Activated CD8-positive, alpha-beta T cell treated with anti-CD3 and anti-CD28 coated beads, Interleukin-2, amount 10 ng/mL, durations not matched to agents 7 days and 5 days (primary cell): ENCODE measurements at regions of chr1 and their contacts with region 1.

Region 1: DNA sequence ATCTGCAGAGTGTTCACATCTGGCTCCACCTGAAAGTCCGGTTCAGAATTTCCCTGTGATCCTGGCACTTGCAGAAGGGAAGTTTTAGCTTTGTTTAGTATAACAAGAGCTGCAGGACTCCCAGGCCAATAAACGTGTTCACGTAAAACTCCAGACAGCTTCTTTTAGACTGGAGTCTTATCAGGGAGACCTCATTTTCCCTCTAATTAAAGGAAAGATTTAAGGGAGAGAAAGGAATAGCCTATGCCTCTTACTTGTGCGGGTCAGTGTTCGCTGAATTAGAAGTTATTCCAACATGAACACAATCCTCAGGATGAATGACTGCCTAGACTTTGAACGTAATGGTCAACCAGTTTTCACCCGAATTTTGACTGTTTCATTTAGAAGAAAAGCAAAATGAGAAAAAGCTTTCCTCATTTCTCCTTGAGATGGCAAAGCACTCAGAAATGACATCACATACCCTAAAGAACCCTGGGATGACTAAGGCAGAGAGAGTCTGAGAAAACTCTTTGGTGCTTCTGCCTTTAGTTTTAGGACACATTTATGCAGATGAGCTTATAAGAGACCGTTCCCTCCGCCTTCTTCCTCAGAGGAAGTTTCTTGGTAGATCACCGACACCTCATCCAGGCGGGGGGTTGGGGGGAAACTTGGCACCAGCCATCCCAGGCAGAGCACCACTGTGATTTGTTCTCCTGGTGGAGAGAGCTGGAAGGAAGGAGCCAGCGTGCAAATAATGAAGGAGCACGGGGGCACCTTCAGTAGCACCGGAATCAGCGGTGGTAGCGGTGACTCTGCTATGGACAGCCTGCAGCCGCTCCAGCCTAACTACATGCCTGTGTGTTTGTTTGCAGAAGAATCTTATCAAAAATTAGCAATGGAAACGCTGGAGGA is 202.1 kb upstream of the SGIP1 start:
- DNase-seq: peak; percentile 60
- ATAC-seq: peak; percentile 40
- H3K4me3 Mint-ChIP-seq: peak overlapping the region; percentile 97
- H3K27ac Mint-ChIP-seq: peak overlapping the region; percentile 91
- H3K4me1 Mint-ChIP-seq: peaks cover 57% of the 10 kb centered on the region
- H3K27me3 Mint-ChIP-seq: no peaks in the 10 kb centered on the region

Region 2: DNA sequence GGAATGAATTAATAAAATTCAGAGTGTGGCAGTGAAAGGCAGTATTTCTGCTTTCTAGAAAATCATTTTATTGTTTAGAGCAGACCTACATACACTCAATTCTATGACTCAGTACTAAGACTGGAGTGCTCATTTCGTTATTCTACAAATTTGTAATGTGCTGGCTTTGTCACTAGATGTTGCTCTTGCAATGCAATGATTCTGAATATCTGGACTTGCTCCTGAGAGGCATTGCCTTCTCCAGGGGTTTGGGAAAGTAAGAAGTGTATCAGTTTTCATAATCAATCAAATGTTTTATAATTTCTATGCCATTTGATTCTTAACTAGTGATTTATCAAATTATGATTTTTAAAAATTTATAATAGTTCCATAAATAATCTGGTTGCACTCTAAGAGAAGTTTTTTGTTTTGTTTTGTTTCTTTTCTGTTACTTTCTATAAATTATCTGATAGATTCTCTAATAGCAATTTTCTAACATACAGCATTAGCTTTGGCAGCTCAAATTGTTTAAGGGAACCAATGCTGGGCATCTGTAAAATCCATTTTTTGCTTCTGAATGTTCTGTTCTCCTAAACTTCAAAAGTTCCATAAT is 78.5 kb before region 1 on chr1:
- CTCF ChIA-PET with region 1: interaction called, 16 read pairs
- POLR2A ChIA-PET with region 1: interaction called, 6 read pairs
- DNase-seq: peak; percentile 46
- ATAC-seq: peak; percentile 83
- H3K4me3 Mint-ChIP-seq: no peak overlapping the region
- H3K27ac Mint-ChIP-seq: no peak overlapping the region
- H3K4me1 Mint-ChIP-seq: peaks cover 37% of the 10 kb centered on the region
- H3K27me3 Mint-ChIP-seq: no peaks in the 10 kb centered on the region

Region 3: DNA sequence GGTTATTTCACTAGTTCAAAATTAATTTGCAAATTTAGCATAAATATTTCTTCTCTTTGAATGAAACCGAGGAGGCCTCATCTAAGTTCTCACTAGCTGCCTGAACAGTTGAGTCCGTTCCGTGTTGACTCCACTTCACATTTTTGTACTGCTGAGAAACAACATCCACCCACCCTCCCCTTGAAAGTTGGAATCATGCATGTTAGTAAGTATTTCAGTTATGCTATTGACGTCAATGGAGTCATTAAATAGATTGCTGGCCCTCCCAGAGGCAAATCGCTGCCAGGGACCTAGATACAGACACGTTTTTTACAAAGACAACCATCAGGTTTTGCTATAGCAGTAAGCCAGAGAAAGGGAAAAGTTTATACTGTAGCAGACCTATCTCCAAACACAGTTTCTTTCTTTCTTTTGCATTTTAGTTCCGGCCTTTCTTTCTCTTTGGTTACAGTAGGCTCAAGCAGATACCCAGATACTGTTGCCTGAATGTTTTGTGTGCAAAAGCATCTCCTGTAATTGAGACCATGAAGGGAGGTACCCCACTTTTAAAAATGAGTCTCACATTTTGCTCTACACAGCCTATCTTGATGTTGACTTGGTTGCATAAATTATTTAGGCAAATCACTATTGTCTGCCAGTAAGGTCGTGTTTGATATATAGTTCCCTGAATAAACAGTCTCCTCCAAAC is 60.5 kb before region 1 on chr1:
- CTCF ChIA-PET with region 1: interaction called, 35 read pairs
- POLR2A ChIA-PET with region 1: interaction called, 67 read pairs
- DNase-seq: no peak
- ATAC-seq: no peak
- H3K4me3 Mint-ChIP-seq: no peak overlapping the region
- H3K27ac Mint-ChIP-seq: peak overlapping the region; percentile 54
- H3K4me1 Mint-ChIP-seq: peaks cover 56% of the 10 kb centered on the region
- H3K27me3 Mint-ChIP-seq: no peaks in the 10 kb centered on the region

Region 4: GRCh38 chr1:66282343-66282852 is 49.5 kb before region 1 on chr1:
- CTCF ChIA-PET with region 1: interaction called, 35 read pairs
- POLR2A ChIA-PET with region 1: interaction called, 22 read pairs
- DNase-seq: peak; percentile 72
- ATAC-seq: peak; percentile 91
- H3K4me3 Mint-ChIP-seq: no peak overlapping the region
- H3K27ac Mint-ChIP-seq: peak overlapping the region; percentile 66
- H3K4me1 Mint-ChIP-seq: peaks cover 91% of the 10 kb centered on the region
- H3K27me3 Mint-ChIP-seq: no peaks in the 10 kb centered on the region

Region 5: GRCh38 chr1:66300972-66301451 is 30.9 kb before region 1 on chr1:
- CTCF ChIA-PET with region 1: interaction called, 33 read pairs
- POLR2A ChIA-PET with region 1: interaction called, 6 read pairs
- DNase-seq: peak; percentile 49
- ATAC-seq: peak; percentile 79
- H3K4me3 Mint-ChIP-seq: peak overlapping the region; percentile 77
- H3K27ac Mint-ChIP-seq: peak overlapping the region; percentile 88
- H3K4me1 Mint-ChIP-seq: peaks cover 41% of the 10 kb centered on the region
- H3K27me3 Mint-ChIP-seq: no peaks in the 10 kb centered on the region

Region 6: DNA sequence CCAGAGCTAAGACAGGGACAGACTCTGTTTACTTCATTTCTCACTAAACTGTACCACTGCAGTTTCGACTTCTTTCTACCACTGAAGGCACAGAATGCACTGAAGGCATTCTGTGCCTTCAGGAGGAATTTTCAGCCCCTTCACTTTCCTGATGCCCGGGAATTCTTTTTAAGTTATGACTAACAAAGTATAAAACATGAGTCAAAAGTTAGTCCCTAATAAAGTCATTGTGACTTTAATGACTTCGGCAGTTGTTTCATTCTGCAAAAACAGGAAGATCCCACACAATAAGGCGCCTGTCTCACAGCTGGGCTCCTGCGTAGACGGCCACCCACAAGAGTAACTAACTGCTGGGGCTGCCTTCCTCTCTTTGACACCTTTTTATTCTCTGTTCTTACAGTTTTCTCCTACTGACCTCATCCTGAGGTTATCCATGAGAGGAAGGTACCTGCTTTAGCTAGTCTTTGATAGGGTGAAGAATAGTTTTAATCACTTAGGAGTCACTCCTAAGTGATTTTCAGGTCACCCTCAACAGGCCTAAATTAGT is 18.2 kb after region 1 on chr1:
- CTCF ChIA-PET with region 1: interaction called, 76 read pairs
- POLR2A ChIA-PET with region 1: interaction called, 87 read pairs
- DNase-seq: peak; percentile 60
- ATAC-seq: peak; percentile 67
- H3K4me3 Mint-ChIP-seq: peak overlapping the region; percentile 77
- H3K27ac Mint-ChIP-seq: peak overlapping the region; percentile 84
- H3K4me1 Mint-ChIP-seq: peaks cover 88% of the 10 kb centered on the region
- H3K27me3 Mint-ChIP-seq: no peaks in the 10 kb centered on the region